A673 (cell line): ENCODE measurements at regions of chr21 and their contacts with region 1.

Region 1: GRCh38 chr21:43015921-43016540 is 41.7 kb downstream of the PKNOX1 start:
- DNase-seq: no peak
- H3K4me3 ChIP-seq: no peak overlapping the region
- H3K27ac ChIP-seq: no peak overlapping the region
- H3K4me1 ChIP-seq: no peaks in the 10 kb centered on the region
- H3K27me3 ChIP-seq: no peaks in the 10 kb centered on the region
- CTCF ChIP-seq: no peak

Region 2: GRCh38 chr21:42939582-42940410 is 76.2 kb before region 1 on chr21:
- CTCF ChIA-PET with region 1: interaction called, 11 read pairs
- POLR2A ChIA-PET with region 1: no interaction called
- intact Hi-C with region 1: no loop called
- DNase-seq: peak; percentile 90
- H3K4me3 ChIP-seq: no peak overlapping the region
- H3K27ac ChIP-seq: peak overlapping the region; percentile 60
- H3K4me1 ChIP-seq: peaks cover 7% of the 10 kb centered on the region
- H3K27me3 ChIP-seq: no peaks in the 10 kb centered on the region
- CTCF ChIP-seq: no peak

Region 3: DNA sequence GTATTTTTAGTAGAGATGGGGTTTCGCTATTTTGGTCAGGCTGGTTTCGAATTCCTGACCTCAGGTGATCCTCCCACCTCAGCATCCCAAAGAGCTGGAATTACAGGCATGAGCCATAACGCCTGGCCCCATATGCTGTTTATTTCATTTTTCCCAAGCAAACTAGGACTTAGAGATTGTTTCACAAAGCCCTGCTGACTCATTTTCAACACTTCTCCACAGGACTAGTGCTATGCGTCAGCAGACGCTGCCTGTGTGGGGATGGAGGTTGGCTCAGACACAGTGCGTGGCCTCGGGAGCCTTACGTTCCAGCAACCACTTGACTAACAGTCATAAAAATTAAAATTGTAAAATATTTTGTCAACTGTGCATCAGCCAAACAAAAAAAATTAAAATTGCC is 19.0 kb before region 1 on chr21:
- CTCF ChIA-PET with region 1: no interaction called
- POLR2A ChIA-PET with region 1: no interaction called
- intact Hi-C with region 1: no loop called
- DNase-seq: peak; percentile 43
- H3K4me3 ChIP-seq: no peak overlapping the region
- H3K27ac ChIP-seq: no peak overlapping the region
- H3K4me1 ChIP-seq: peaks cover 9% of the 10 kb centered on the region
- H3K27me3 ChIP-seq: no peaks in the 10 kb centered on the region
- CTCF ChIP-seq: no peak

Region 4: GRCh38 chr21:43034098-43034497 is 18.1 kb after region 1 on chr21:
- CTCF ChIA-PET with region 1: no interaction called
- POLR2A ChIA-PET with region 1: no interaction called
- intact Hi-C with region 1: loop called (anchors 2 kb)
- DNase-seq: no peak
- H3K4me3 ChIP-seq: no peak overlapping the region
- H3K27ac ChIP-seq: no peak overlapping the region
- H3K4me1 ChIP-seq: no peaks in the 10 kb centered on the region
- H3K27me3 ChIP-seq: no peaks in the 10 kb centered on the region
- CTCF ChIP-seq: no peak